ENCODE measurements at regions of chr17 and their contacts with region 1.

Region 1: GRCh38 chr17:30084788-30085187 is 31.8 kb upstream of the NSRP1 start:
- DNase-seq: no peak
- ATAC-seq: no peak
- H3K4me3 Mint-ChIP-seq: no peak overlapping the region
- H3K27ac Mint-ChIP-seq: no peak overlapping the region
- H3K4me1 Mint-ChIP-seq: no peaks in the 10 kb centered on the region
- H3K27me3 Mint-ChIP-seq: peaks cover 10% of the 10 kb centered on the region
- CTCF ChIP-seq: no peak

Region 2: GRCh38 chr17:29653995-29654714 is 430.6 kb before region 1 on chr17:
- CTCF ChIA-PET with region 1: no interaction called
- POLR2A ChIA-PET with region 1: interaction called, 13 read pairs
- DNase-seq: no peak
- ATAC-seq: no peak
- H3K4me3 Mint-ChIP-seq: no peak overlapping the region
- H3K27ac Mint-ChIP-seq: no peak overlapping the region
- H3K4me1 Mint-ChIP-seq: no peaks in the 10 kb centered on the region
- H3K27me3 Mint-ChIP-seq: no peaks in the 10 kb centered on the region
- CTCF ChIP-seq: no peak

Region 3: GRCh38 chr17:29838961-29839360 is 245.8 kb before region 1 on chr17:
- CTCF ChIA-PET with region 1: no interaction called
- POLR2A ChIA-PET with region 1: no interaction called
- DNase-seq: peak; percentile 53
- ATAC-seq: peak; percentile 68
- H3K4me3 Mint-ChIP-seq: no peak overlapping the region
- H3K27ac Mint-ChIP-seq: no peak overlapping the region
- H3K4me1 Mint-ChIP-seq: peaks cover 15% of the 10 kb centered on the region
- H3K27me3 Mint-ChIP-seq: no peaks in the 10 kb centered on the region
- CTCF ChIP-seq: no peak

Region 4: GRCh38 chr17:29982991-29983653 is 101.7 kb before region 1 on chr17:
- CTCF ChIA-PET with region 1: no interaction called
- POLR2A ChIA-PET with region 1: no interaction called
- DNase-seq: no peak
- ATAC-seq: no peak
- H3K4me3 Mint-ChIP-seq: no peak overlapping the region
- H3K27ac Mint-ChIP-seq: no peak overlapping the region
- H3K4me1 Mint-ChIP-seq: no peaks in the 10 kb centered on the region
- H3K27me3 Mint-ChIP-seq: peaks cover 12% of the 10 kb centered on the region
- CTCF ChIP-seq: no peak

Region 5: GRCh38 chr17:30031214-30031869 is 53.4 kb before region 1 on chr17:
- CTCF ChIA-PET with region 1: no interaction called
- POLR2A ChIA-PET with region 1: no interaction called
- DNase-seq: no peak
- ATAC-seq: no peak
- H3K4me3 Mint-ChIP-seq: no peak overlapping the region
- H3K27ac Mint-ChIP-seq: no peak overlapping the region
- H3K4me1 Mint-ChIP-seq: no peaks in the 10 kb centered on the region
- H3K27me3 Mint-ChIP-seq: no peaks in the 10 kb centered on the region; the same call in 1 of the 2 replicates
- CTCF ChIP-seq: no peak

Measured in WTC11 (cell line).